Mammary epithelial cell (primary cell): ENCODE measurements at regions of chr11 and their contacts with region 1.

Region 1: GRCh38 chr11:11009179-11009578 is 151.3 kb upstream of the ZBED5 start:
- DNase-seq: no peak
- H3K4me3 ChIP-seq: no peak overlapping the region
- H3K27ac ChIP-seq: no peak overlapping the region
- H3K4me1 ChIP-seq: no peaks in the 10 kb centered on the region
- H3K27me3 ChIP-seq: peaks cover 9% of the 10 kb centered on the region
- CTCF ChIP-seq: no peak

Region 2: DNA sequence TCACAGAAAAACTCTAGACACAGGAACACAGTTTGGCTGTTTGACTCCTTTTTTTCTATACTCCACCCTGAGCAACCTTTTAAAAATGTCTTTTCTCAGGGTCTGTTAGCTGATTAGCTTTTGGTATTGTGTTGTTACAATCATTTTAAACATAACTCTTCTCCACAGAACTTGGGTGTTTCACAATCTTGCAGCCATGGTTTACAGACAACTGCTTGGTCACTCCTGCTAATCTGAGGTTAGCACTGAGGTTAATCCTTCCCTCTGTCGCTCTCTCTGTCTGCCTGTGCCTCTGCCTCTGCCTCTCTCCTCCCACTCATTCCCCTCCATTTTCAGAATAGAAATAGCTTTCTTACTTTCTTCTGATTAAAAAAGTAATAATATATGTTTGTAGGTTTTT is 89.0 kb before region 1 on chr11:
- CTCF ChIA-PET with region 1: no interaction called
- dilution Hi-C with region 1: loop called (anchors 5 kb)
- in situ Hi-C with region 1: no loop called
- intact Hi-C with region 1: no loop called
- DNase-seq: no peak
- H3K4me3 ChIP-seq: no peak overlapping the region
- H3K27ac ChIP-seq: no peak overlapping the region
- H3K4me1 ChIP-seq: peaks cover 11% of the 10 kb centered on the region
- H3K27me3 ChIP-seq: no peaks in the 10 kb centered on the region
- CTCF ChIP-seq: no peak

Region 3: DNA sequence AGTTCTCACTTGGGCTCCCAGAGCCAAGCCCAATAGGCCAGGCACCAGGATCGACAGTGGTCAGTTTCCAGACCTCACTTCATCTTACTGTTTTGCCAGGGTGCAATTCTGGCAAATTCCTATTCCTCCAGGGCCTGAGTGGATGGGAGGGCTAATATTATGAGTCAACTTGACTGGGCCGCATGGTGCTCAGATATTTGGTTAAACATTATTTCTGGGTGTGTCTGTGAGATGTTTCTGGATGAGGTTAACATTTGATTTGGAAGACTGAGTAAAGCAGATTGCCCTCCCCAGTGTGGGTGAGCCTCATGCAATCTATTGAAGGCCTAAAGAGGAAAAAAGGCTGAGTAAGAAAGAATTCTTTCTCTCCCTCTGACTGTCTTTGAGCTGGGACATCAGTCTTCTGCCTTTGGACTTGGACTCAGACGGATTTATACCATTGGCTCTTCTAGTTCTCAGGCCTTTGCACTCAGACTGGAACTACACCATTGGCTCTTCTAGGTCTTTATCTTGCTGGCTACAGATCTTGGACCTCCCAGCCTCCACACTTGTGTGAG is 18.5 kb before region 1 on chr11:
- CTCF ChIA-PET with region 1: no interaction called
- dilution Hi-C with region 1: no loop called
- in situ Hi-C with region 1: no loop called
- intact Hi-C with region 1: no loop called
- DNase-seq: peak; percentile 9
- H3K4me3 ChIP-seq: no peak overlapping the region
- H3K27ac ChIP-seq: no peak overlapping the region
- H3K4me1 ChIP-seq: no peaks in the 10 kb centered on the region
- H3K27me3 ChIP-seq: no peaks in the 10 kb centered on the region
- CTCF ChIP-seq: no peak